ENCODE measurements at regions of chr16 and their contacts with region 1.

Region 1: DNA sequence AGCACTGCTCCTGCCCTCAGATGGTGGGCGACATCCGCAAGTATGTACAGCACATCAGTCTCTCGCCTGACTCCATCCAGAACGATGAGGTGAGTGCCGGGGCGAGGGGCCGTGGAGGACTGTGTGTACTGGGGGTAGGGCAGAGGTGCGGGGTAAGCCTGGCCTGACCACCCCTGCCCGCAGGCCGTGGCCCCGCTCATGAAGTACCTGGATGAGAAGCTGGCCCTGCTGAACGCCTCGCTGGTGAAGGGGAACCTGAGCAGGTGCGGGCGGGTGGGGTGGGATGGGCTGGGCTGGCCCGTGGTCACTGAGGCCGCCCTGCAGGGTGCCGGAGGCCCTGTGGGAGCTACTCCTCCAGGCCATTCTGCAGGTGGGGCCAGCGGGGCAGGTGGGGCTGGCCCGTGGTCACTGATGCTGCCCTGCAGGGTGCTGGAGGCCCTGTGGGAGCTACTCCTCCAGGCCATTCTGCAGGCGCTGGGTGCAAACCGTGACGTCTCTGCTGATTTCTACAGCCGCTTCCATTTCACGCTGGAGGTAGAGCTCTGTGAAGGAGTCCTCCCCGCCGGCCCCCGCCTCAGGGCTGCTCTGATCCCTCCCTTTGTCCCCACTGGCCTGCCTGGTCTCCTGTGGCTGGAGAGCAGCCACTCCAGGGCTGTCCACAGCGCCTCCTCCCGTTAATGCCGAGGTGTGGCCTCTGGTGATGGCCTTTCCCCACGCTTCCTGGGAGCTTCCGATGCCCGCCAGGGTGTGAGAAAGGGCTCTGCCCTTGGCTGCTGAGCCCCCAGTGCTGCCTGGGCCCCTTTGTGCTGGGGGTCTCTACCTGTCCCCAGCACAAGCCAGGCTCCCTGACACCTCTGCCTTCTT is 5.0 kb downstream of the TSR3 start:
- DNase-seq: no peak
- ATAC-seq: no peak
- H3K4me3 ChIP-seq: no peak overlapping the region
- H3K27ac ChIP-seq: no peak overlapping the region
- H3K4me1 ChIP-seq: peaks cover 10% of the 10 kb centered on the region
- H3K27me3 ChIP-seq: no peaks in the 10 kb centered on the region
- CTCF ChIP-seq: peak; percentile 64; the same call in 1 of the 2 replicates

Region 2: GRCh38 chr16:1331712-1332617 is 14.7 kb before region 1 on chr16:
- CTCF ChIA-PET with region 1: interaction called, 11 read pairs
- POLR2A ChIA-PET with region 1: no interaction called
- in situ Hi-C with region 1: no loop called
- intact Hi-C with region 1: no loop called
- DNase-seq: no peak
- ATAC-seq: peak; percentile 56
- H3K4me3 ChIP-seq: peak overlapping the region in 1 of 2 experiments; percentile 43; a peak in 2 of 4 replicates
- H3K27ac ChIP-seq: peak overlapping the region; percentile 57; the same call in 1 of the 2 replicates
- H3K4me1 ChIP-seq: peaks cover 17% of the 10 kb centered on the region
- H3K27me3 ChIP-seq: no peaks in the 10 kb centered on the region
- CTCF ChIP-seq: no peak

Region 3: GRCh38 chr16:1543085-1543896 is 196.6 kb after region 1 on chr16:
- CTCF ChIA-PET with region 1: no interaction called
- POLR2A ChIA-PET with region 1: no interaction called
- in situ Hi-C with region 1: no loop called
- intact Hi-C with region 1: no loop called
- DNase-seq: no peak
- ATAC-seq: peak; percentile 65
- H3K4me3 ChIP-seq: no peak overlapping the region
- H3K27ac ChIP-seq: no peak overlapping the region
- H3K4me1 ChIP-seq: peaks cover 7% of the 10 kb centered on the region
- H3K27me3 ChIP-seq: no peaks in the 10 kb centered on the region
- CTCF ChIP-seq: no peak